ENCODE measurements at regions of chr19 and their contacts with region 1.

Region 1: GRCh38 chr19:20661150-20661819 is at the start of gene ZNF626:
- DNase-seq: peak; percentile 89 to 97
- ATAC-seq: peak; percentile 97 to 99 (median 98)
- H3K4me3 ChIP-seq: peak within 1 kb of the TSS; percentile 77
- H3K4me3 Mint-ChIP-seq: peak within 1 kb of the TSS; percentile 96
- H3K27ac ChIP-seq: peak within 1 kb of the TSS; percentile 89
- H3K27ac Mint-ChIP-seq: peak within 1 kb of the TSS; percentile 96
- H3K4me1 ChIP-seq: peaks cover 13% of the 10 kb centered on the region
- H3K4me1 Mint-ChIP-seq: peaks cover 34 to 35% of the 10 kb centered on the region in 2 donors
- H3K27me3 ChIP-seq: no peaks in the 10 kb centered on the region
- H3K27me3 Mint-ChIP-seq: no peaks in the 10 kb centered on the region
- CTCF ChIP-seq: no peak
- total RNA-seq, gene ZNF626: 11.4 to 16.7 (median 13.0) TPM

Region 2: GRCh38 chr19:20565321-20566018 is 95.8 kb before region 1 on chr19 and contains the start of gene ZNF737:
- intact Hi-C with region 1: loop called (anchors 1 kb)
- DNase-seq: peak; percentile 90 to 97
- ATAC-seq: peak; percentile 90 to 95 (median 92)
- H3K4me3 ChIP-seq: peak within 1 kb of the TSS; percentile 78
- H3K4me3 Mint-ChIP-seq: peak within 1 kb of the TSS; percentile 100
- H3K27ac ChIP-seq: peak within 1 kb of the TSS; percentile 84
- H3K27ac Mint-ChIP-seq: peak within 1 kb of the TSS; percentile 99 to 100
- H3K4me1 ChIP-seq: peaks cover 11% of the 10 kb centered on the region
- H3K4me1 Mint-ChIP-seq: peaks cover 31 to 36% of the 10 kb centered on the region in 2 donors
- H3K27me3 ChIP-seq: no peaks in the 10 kb centered on the region
- H3K27me3 Mint-ChIP-seq: no peaks in the 10 kb centered on the region
- CTCF ChIP-seq: no peak
- total RNA-seq, gene ZNF737: 10.1 to 16.5 (median 13.7) TPM

Region 3: GRCh38 chr19:20612711-20613316 is 48.5 kb before region 1 on chr19:
- intact Hi-C with region 1: no loop called
- DNase-seq: no peak
- ATAC-seq: no peak
- H3K4me3 ChIP-seq: no peak overlapping the region
- H3K4me3 Mint-ChIP-seq: no peak overlapping the region
- H3K27ac ChIP-seq: no peak overlapping the region
- H3K27ac Mint-ChIP-seq: no peak overlapping the region
- H3K4me1 ChIP-seq: no peaks in the 10 kb centered on the region
- H3K4me1 Mint-ChIP-seq: peaks cover 0 to 7% of the 10 kb centered on the region in 2 donors
- H3K27me3 ChIP-seq: no peaks in the 10 kb centered on the region
- H3K27me3 Mint-ChIP-seq: no peaks in the 10 kb centered on the region
- CTCF ChIP-seq: no peak

Region 4: DNA sequence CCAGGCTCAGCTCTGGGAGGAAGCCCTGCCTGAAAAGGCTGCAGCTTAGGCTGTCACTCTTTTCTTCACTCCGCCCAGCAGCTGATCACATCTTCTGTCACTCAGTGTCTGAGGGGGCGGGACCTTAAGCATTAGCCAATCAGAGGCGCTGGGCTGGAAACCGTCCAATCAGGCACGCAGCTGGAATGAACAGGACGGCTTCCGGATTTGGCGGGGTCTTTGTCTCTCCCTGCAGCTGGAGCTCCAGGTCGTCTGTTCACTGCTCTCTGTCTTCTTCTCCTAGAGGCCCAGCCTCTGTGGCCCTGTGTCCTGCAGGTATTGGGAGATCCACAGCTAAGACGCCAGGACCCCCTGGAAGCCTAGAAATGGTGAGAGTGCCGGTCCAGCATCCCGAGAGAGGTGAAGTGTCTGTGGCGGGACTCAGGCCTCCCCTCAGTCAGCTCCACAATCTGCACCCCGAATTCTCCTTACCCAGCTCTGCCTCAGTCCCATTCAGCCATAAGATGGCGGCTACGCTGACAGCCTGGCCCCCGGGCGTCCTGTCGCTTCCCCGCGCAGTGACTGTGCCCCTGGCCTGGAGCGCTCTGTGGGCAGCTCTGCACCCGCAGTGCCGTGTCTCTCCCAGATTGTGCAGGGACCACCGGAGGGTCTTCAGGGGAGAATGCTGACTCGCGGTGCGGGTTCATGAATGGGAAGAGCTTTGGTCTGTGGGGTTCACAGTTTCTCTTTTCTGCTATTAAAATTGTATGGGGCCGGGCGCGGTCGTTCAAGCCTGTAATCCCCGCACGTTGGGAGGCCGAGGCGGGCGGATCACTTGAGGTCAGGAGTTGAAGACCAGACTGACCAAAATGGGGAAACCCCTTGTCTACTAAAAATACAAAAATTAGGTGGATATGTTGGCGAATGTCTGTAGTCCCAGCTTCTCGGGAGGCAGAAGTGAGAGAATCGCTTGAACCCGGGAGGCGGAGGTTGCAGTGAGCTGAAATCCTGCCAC is 115.1 kb after region 1 on chr19 and contains the start of gene ZNF66:
- intact Hi-C with region 1: loop called (anchors 1 kb)
- DNase-seq: peak; percentile 96 to 97
- ATAC-seq: peak; percentile 97 to 99 (median 99)
- H3K4me3 ChIP-seq: peak within 1 kb of the TSS; percentile 80
- H3K4me3 Mint-ChIP-seq: peak within 1 kb of the TSS; percentile 99
- H3K27ac ChIP-seq: peak within 1 kb of the TSS; percentile 78
- H3K27ac Mint-ChIP-seq: peak within 1 kb of the TSS; percentile 97 to 98
- H3K4me1 ChIP-seq: peaks cover 3% of the 10 kb centered on the region
- H3K4me1 Mint-ChIP-seq: peaks cover 13 to 28% of the 10 kb centered on the region in 2 donors
- H3K27me3 ChIP-seq: no peaks in the 10 kb centered on the region
- H3K27me3 Mint-ChIP-seq: no peaks in the 10 kb centered on the region
- CTCF ChIP-seq: no peak
- total RNA-seq, gene ZNF66: 7.7 to 11.8 (median 10.6) TPM

Region 5: DNA sequence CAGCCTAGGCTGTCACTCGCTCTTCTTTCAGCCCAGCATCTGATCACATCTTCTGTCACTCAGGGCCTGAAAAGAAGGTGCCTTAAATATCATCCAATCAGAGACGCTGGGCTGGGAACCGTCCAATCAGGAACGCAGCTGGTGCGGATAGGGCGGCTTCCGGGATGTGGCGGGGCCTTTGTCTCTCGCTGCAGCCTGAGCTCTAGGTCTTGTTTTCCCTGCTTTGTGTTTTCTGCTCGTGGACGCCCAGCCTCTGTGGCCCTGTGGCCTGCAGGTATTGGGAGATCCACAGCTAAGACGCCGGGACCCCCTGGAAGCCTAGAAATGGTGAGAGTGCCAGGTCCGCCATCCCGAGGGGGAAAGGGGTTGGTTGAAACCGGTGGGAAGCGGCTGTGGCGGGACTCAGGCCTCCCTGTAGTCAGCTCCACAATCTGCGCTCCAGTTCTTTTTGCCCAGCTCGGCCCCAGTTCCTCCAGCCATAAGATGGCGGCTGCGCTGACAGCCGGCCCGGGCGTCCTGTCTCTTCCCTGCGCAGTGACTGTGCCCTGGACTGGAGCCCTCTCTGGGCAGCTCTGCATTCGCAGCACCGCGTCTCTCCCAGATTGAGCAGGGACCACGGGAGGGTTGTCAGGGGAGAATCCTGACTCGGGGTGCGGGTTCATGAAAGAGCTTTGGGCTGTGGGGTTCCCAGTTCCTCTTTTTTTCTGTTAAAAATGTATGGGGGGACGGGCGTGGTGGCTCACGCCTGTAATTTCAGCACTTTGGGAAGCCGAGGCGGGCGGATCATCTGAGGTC is 262.0 kb after region 1 on chr19 and contains the start of gene ZNF85:
- intact Hi-C with region 1: loop called (anchors 5 kb)
- DNase-seq: peak; percentile 89 to 94
- ATAC-seq: peak; percentile 96 to 99 (median 99)
- H3K4me3 ChIP-seq: peak within 1 kb of the TSS; percentile 73
- H3K4me3 Mint-ChIP-seq: peak within 1 kb of the TSS; percentile 97
- H3K27ac ChIP-seq: peak within 1 kb of the TSS; percentile 91
- H3K27ac Mint-ChIP-seq: peak within 1 kb of the TSS; percentile 91 to 98
- H3K4me1 ChIP-seq: peaks cover 11% of the 10 kb centered on the region
- H3K4me1 Mint-ChIP-seq: peaks cover 19% of the 10 kb centered on the region in 2 donors
- H3K27me3 ChIP-seq: no peaks in the 10 kb centered on the region
- H3K27me3 Mint-ChIP-seq: no peaks in the 10 kb centered on the region
- CTCF ChIP-seq: no peak
- total RNA-seq, gene ZNF85: 3.9 to 8.6 (median 5.4) TPM

Measured in natural killer cell (primary cell).